HEK293T (cell line): ENCODE measurements at regions of chr18 and their contacts with region 1.

Region 1: DNA sequence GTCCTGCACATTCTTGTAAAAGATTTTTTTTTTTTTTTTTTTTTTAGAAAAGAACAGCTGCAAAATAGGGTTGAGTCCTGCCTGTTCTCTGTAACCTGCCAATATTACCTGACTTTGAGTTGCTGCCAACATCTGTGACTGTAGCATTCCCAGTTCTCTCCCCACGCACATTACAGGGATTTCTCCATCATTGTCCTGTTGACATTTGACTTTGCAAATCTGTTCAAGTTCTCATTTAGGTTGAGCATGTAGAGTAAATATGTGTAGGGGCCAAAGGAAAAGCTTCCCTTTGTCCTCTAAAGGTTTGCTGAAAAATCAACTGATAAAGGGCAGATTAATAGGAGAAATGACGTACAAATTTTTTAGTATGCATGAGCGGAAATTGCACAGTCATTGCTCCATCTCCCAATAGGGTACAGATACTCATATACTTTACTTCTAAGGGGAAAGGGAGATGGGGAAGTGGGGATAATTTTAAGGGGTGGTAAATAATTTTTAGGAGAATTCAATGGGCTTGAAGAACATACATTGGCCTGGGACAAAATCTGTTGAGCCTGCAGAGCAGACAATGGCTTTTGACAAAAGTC is 385.5 kb downstream of the PIK3C3 start:
- DNase-seq: no peak

Region 2: GRCh38 chr18:41949206-41949920 is 391.2 kb before region 1 on chr18:
- CTCF ChIA-PET with region 1: no interaction called
- POLR2A ChIA-PET with region 1: no interaction called
- DNase-seq: no peak

Region 3: DNA sequence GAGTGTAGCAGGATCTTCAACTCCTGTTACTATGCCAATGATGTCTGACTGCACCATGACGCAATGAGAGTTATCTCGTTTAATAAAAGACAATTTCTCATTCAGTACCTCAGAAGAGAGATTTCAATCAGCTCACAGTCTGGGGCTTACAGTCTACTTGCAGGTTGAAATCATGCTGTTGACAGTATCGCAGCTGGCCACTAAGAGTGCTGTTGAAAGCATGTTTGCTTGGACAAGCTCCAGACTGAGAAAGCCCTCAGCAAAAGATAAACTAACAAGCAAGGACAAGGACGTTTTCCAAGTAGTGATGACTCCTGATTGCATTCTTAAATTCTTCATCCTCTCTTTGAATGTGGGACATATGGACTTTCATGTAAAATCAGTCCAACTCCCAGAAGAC is 1082.0 kb after region 1 on chr18:
- CTCF ChIA-PET with region 1: interaction called, 15 read pairs
- POLR2A ChIA-PET with region 1: no interaction called
- DNase-seq: peak; percentile 5